Dendritic cell treated with granulocyte-macrophage colony-stimulating factor and Interleukin-4, amounts not matched to agents 40 ng/mL and 50 ng/mL, for 4 days (primary cell): ENCODE measurements at regions of chr7 and their contacts with region 1.

Region 1: GRCh38 chr7:149497456-149498261 is at the start of gene ZNF746:
- H3K4me3 Mint-ChIP-seq: peak within 1 kb of the TSS; percentile 97
- H3K27ac Mint-ChIP-seq: peak within 1 kb of the TSS; percentile 97
- H3K4me1 Mint-ChIP-seq: peaks cover 40% of the 10 kb centered on the region
- H3K27me3 Mint-ChIP-seq: peaks cover 2% of the 10 kb centered on the region

Region 2: GRCh38 chr7:149147072-149147751 is 350.4 kb before region 1 on chr7 and contains the start of gene ZNF398:
- intact Hi-C with region 1: loop called (anchors 5 kb)
- H3K4me3 Mint-ChIP-seq: peak within 1 kb of the TSS; percentile 85
- H3K27ac Mint-ChIP-seq: peak within 1 kb of the TSS; percentile 90
- H3K4me1 Mint-ChIP-seq: peaks cover 30% of the 10 kb centered on the region
- H3K27me3 Mint-ChIP-seq: no peaks in the 10 kb centered on the region

Region 3: DNA sequence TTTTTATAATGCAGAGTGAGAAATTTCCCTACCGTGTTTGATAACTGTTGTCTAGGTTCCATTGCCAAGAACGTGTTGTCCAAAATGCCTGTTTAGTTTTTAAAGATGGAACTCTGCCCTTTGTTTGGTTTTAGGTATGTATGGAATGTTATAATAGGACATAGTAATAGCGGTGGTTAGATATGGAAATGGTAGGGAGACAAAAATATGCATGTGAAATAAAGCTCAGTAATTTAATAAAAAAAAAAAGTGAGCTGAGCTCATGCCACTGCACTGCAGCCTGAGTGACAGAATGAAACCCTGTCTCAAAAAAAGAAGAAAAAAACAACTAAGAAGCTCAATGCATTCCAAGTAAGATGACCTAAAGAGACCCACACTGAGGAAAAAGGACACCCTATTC is 162.7 kb before region 1 on chr7:
- intact Hi-C with region 1: no loop called
- H3K4me3 Mint-ChIP-seq: no peak overlapping the region
- H3K27ac Mint-ChIP-seq: no peak overlapping the region
- H3K4me1 Mint-ChIP-seq: no peaks in the 10 kb centered on the region
- H3K27me3 Mint-ChIP-seq: peaks cover 2% of the 10 kb centered on the region

Region 4: GRCh38 chr7:149398195-149398820 is 99.4 kb before region 1 on chr7:
- intact Hi-C with region 1: no loop called
- H3K4me3 Mint-ChIP-seq: no peak overlapping the region
- H3K27ac Mint-ChIP-seq: no peak overlapping the region
- H3K4me1 Mint-ChIP-seq: no peaks in the 10 kb centered on the region
- H3K27me3 Mint-ChIP-seq: peaks cover 20% of the 10 kb centered on the region

Region 5: GRCh38 chr7:149422129-149422913 is 75.3 kb before region 1 on chr7:
- intact Hi-C with region 1: loop called (anchors 2 kb)
- H3K4me3 Mint-ChIP-seq: peak overlapping the region; percentile 72
- H3K27ac Mint-ChIP-seq: peak overlapping the region; percentile 56
- H3K4me1 Mint-ChIP-seq: peaks cover 15% of the 10 kb centered on the region
- H3K27me3 Mint-ChIP-seq: peaks cover 26% of the 10 kb centered on the region

Region 6: DNA sequence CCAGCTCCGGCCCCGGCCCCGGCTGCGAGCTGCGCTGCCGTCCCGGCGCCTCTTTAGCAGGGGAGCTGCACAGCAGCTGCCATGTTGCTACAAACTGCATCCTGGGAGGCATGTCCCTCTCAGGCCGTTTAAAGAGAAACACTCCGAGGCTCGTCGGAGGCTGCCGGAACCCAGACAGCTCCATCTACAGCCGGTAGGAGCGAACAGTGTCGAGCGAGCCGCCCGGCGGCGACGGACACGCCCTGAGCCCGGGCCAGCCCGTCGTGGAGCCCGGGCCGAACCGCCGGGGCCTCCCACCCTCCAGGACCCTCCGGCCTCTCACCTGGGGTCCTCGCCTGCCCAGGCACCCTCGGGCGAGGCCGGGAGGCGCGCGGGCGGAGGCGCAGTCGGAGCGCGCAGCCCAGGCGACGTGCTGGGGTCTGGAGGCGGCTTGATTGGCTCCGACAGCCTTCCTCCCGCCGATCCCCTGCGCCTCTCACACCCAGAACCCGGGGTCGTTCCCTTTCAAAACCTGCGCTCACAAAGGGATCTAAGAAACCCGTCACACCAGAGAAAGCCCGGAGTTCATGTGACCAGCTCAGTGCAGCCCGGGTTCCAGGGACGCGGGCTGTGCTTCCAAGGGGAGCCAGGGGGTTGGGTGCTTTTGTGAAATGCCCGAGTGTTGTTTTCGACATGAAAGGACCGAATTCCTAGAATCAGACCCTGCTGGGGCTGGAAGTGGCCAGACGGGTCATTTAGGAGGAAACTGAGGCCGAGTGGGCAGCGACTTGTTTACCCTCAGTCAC is 37.0 kb before region 1 on chr7 and contains the start of gene ZNF777:
- intact Hi-C with region 1: loop called (anchors 5 kb)
- H3K4me3 Mint-ChIP-seq: peak within 1 kb of the TSS; percentile 83
- H3K27ac Mint-ChIP-seq: peak within 1 kb of the TSS; percentile 77
- H3K4me1 Mint-ChIP-seq: peaks cover 25% of the 10 kb centered on the region
- H3K27me3 Mint-ChIP-seq: peaks cover 33% of the 10 kb centered on the region

Region 7: DNA sequence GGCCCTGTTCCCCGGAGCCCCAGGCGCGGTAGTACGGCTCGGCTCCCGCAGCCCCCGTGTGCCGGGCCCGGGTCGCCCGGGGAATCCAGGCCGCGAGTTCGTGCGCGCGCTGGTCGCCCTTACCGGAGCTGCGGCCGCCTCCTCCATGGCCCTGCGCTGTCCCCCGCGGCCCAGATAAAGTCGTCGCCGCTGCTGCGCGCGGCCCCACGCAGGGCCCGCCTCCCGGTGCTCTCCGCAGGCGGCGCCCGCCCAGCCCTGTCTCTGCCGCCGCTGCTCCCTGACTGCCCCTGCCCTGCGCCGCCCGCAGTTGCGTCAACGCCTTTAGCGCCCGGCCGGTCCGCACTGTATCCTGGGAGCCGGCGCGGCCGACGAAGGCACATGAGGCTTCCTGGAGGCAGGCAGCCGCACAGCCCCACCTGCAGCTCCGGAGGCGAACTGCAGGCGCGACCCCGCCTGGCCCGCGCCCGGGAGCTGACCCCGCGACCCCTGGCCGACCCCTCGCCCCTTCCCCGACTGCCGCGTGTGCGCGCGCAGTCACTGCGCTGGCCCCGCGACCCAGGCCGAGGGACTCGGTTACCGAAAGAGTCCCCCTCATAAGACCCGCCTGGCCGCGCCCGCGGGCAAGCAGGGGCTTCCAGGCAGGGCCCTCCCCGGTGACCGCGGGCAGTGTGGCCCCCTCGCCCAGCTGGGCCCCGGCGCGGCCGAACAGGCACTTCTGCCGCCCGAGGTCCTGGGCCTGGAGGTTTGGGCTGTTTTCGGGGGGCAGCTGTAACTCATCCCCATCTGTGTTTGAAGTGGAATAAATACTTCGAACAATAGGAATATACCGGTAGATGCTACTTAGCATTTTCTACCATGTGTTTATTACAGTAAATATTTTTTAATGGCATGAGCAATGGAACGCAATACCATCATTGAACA is 127.0 kb after region 1 on chr7:
- intact Hi-C with region 1: loop called (anchors 2 kb)
- H3K4me3 Mint-ChIP-seq: peak overlapping the region; percentile 95
- H3K27ac Mint-ChIP-seq: peak overlapping the region; percentile 93
- H3K4me1 Mint-ChIP-seq: peaks cover 37% of the 10 kb centered on the region
- H3K27me3 Mint-ChIP-seq: peaks cover 2% of the 10 kb centered on the region